MCF 10A (cell line): ENCODE measurements at regions of chr3 and their contacts with region 1.

Region 1: GRCh38 chr3:52046186-52046913 is 10.0 kb downstream of the DUSP7 start:
- DNase-seq: peak; percentile 99
- H3K4me3 Mint-ChIP-seq: peak overlapping the region; percentile 68
- H3K27ac Mint-ChIP-seq: peak overlapping the region; percentile 95
- H3K4me1 Mint-ChIP-seq: peaks cover 56% of the 10 kb centered on the region
- H3K27me3 Mint-ChIP-seq: no peaks in the 10 kb centered on the region
- CTCF ChIP-seq: no peak

Region 2: DNA sequence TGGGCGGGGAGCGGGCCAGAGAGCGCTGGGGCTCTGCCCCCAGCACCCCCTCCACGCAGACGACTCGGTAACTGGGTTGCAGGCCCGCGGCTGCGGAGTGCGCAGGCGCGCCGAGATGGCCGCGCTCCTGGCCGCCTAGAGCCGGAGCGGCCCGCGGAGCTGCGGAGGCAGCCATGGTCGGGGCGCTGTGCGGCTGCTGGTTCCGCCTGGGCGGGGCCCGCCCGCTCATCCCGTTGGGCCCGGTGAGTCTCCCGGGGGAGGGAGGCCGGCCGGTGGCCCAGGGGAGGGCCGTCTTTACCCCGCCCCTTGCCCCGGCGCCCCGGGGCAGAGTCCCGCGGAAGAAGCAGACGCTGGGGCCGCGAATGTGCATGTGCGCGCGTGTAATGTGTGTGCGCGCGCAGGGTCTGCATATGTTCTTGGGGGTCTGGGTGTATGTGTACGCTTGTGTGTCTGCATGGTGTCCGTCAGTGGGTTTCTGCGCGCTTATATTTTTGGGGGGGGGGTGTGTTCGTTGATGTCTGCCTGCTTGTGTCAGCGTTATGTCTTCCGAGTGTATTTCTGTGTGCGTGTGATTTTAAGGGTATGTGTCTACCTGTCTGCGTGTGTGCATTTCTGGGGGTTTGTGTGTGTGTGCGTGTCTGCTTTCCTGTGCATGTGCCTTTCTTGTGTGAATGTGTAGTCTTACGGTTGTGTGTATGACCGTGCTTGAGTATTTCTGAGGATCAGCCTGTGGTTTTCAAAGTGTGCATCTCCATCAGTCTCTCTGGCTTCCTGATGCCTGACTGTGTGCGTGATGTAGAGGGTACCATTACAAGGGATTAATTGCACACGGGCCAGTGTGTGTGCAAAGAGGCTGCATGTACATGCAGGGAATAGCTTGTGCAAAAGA is 71.1 kb before region 1 on chr3 and contains the start of gene ABHD14A:
- CTCF ChIA-PET with region 1: interaction called, 4 read pairs
- POLR2A ChIA-PET with region 1: interaction called, 17 read pairs
- intact Hi-C with region 1: no loop called
- DNase-seq: peak; percentile 72
- H3K4me3 Mint-ChIP-seq: peak within 1 kb of the TSS; percentile 99
- H3K27ac Mint-ChIP-seq: peak within 1 kb of the TSS; percentile 88
- H3K4me1 Mint-ChIP-seq: peaks cover 29% of the 10 kb centered on the region
- H3K27me3 Mint-ChIP-seq: no peaks in the 10 kb centered on the region
- CTCF ChIP-seq: no peak
- total RNA-seq, gene ABHD14A: 4.0 and 8.1 TPM in 2 replicates

Region 3: GRCh38 chr3:51982782-51983577 is 63.4 kb before region 1 on chr3 and contains the start of gene ACY1:
- CTCF ChIA-PET with region 1: interaction called, 4 read pairs
- POLR2A ChIA-PET with region 1: interaction called, 11 read pairs
- intact Hi-C with region 1: no loop called
- DNase-seq: peak; percentile 87
- H3K4me3 Mint-ChIP-seq: peak within 1 kb of the TSS; percentile 87
- H3K27ac Mint-ChIP-seq: peak within 1 kb of the TSS; percentile 98
- H3K4me1 Mint-ChIP-seq: peaks cover 25% of the 10 kb centered on the region
- H3K27me3 Mint-ChIP-seq: no peaks in the 10 kb centered on the region
- CTCF ChIP-seq: no peak
- total RNA-seq, gene ACY1: 109 and 164 TPM in 2 replicates

Region 4: DNA sequence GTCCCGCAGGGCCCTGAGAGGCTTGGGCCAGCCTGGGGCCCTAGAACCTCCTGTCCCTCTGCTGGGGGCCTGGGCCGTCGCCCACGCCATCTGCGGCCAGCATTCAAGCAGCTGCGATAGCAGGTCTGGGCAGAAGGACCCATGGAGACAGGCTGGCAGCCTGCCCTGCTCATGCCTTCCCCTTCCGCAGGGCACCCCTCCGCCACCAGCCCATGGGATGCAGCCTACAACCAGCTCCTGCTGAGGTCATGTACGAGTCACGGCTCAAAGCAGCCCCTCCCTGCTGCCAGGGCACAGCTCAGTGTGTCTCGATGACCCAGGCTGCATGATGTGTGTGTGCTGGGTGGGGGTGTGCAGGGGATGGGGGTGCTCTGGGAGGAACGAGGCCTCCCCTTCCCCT is 17.8 kb before region 1 on chr3:
- CTCF ChIA-PET with region 1: interaction called, 10 read pairs
- POLR2A ChIA-PET with region 1: no interaction called
- intact Hi-C with region 1: no loop called
- DNase-seq: no peak
- H3K4me3 Mint-ChIP-seq: no peak overlapping the region
- H3K27ac Mint-ChIP-seq: no peak overlapping the region
- H3K4me1 Mint-ChIP-seq: peaks cover 21% of the 10 kb centered on the region
- H3K27me3 Mint-ChIP-seq: no peaks in the 10 kb centered on the region
- CTCF ChIP-seq: no peak